Activated naive CD4-positive, alpha-beta T cell treated with anti-CD3 and anti-CD28 coated beads, Interleukin-2, amount 10 ng/mL, durations not matched to agents 7 days and 5 days (primary cell): ENCODE measurements at regions of chr10 and their contacts with region 1.

Region 1: GRCh38 chr10:110803830-110804338 is 67.8 kb upstream of the PDCD4 start:
- DNase-seq: peak; percentile 44
- H3K4me3 Mint-ChIP-seq: no peak overlapping the region
- H3K27ac Mint-ChIP-seq: peak overlapping the region; percentile 80
- H3K4me1 Mint-ChIP-seq: peaks cover 39% of the 10 kb centered on the region
- H3K27me3 Mint-ChIP-seq: peaks cover 9% of the 10 kb centered on the region

Region 2: GRCh38 chr10:110460111-110460809 is 343.6 kb before region 1 on chr10:
- CTCF ChIA-PET with region 1: no interaction called
- DNase-seq: peak; percentile 44
- H3K4me3 Mint-ChIP-seq: no peak overlapping the region
- H3K27ac Mint-ChIP-seq: no peak overlapping the region
- H3K4me1 Mint-ChIP-seq: peaks cover 52% of the 10 kb centered on the region
- H3K27me3 Mint-ChIP-seq: peaks cover 46% of the 10 kb centered on the region

Region 3: GRCh38 chr10:110746254-110746826 is 57.5 kb before region 1 on chr10:
- CTCF ChIA-PET with region 1: interaction called, 24 read pairs
- DNase-seq: peak; percentile 61
- H3K4me3 Mint-ChIP-seq: no peak overlapping the region
- H3K27ac Mint-ChIP-seq: no peak overlapping the region
- H3K4me1 Mint-ChIP-seq: peaks cover 70% of the 10 kb centered on the region
- H3K27me3 Mint-ChIP-seq: peaks cover 4% of the 10 kb centered on the region

Region 4: DNA sequence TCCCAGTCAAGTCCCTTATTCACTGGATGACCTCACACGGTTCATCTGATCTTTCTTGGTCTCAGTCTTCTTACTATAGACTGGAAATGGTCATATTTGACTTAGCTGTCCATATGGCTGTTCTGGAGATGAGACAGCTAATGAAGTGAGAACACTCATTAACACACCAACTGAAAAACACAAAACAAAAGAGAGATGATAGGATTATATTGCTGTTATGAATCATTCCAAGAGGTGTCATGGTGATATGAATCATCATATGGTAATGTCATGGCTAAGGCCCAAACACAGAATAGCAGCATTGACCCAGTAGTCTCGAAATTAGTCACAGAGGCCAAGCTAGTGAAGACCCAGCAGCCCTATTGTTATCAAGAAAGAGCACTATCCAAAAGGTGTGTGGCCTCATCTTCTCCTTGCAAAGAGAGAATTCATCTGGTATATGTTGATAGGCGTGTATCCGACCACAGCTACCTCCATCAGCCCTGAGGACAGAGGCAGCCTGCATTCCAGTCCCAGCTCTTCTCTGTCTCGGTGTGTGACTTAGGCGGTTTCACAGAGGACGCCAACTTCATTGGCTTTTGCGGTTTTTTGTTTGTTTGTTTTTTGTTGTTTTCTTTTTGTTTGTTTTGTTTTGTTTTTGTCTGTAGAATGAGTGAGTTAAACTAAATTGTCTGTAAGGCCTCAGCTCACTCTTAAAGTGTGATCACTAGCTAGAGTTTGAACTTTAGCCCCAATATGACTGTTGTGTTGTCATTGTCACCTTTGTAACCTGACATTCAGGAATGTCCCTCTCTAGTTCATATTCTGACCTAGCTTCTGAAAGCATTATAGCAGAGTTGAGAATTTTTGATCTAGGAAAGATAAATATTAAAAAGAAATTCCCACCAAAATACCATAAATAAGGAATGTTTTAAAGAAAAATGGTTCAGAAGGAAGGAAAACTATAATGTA is 29.5 kb before region 1 on chr10:
- CTCF ChIA-PET with region 1: interaction called, 10 read pairs
- DNase-seq: peak; percentile 25
- H3K4me3 Mint-ChIP-seq: no peak overlapping the region
- H3K27ac Mint-ChIP-seq: no peak overlapping the region
- H3K4me1 Mint-ChIP-seq: peaks cover 11% of the 10 kb centered on the region
- H3K27me3 Mint-ChIP-seq: no peaks in the 10 kb centered on the region

Region 5: GRCh38 chr10:110834629-110835301 is 30.9 kb after region 1 on chr10:
- CTCF ChIA-PET with region 1: interaction called, 13 read pairs
- DNase-seq: peak; percentile 49
- H3K4me3 Mint-ChIP-seq: no peak overlapping the region
- H3K27ac Mint-ChIP-seq: peak overlapping the region; percentile 76
- H3K4me1 Mint-ChIP-seq: peaks cover 39% of the 10 kb centered on the region
- H3K27me3 Mint-ChIP-seq: no peaks in the 10 kb centered on the region

Region 6: GRCh38 chr10:110857265-110858158 is 53.6 kb after region 1 on chr10:
- CTCF ChIA-PET with region 1: interaction called, 16 read pairs
- DNase-seq: no peak
- H3K4me3 Mint-ChIP-seq: no peak overlapping the region
- H3K27ac Mint-ChIP-seq: peak overlapping the region; percentile 95
- H3K4me1 Mint-ChIP-seq: peaks cover 90% of the 10 kb centered on the region
- H3K27me3 Mint-ChIP-seq: no peaks in the 10 kb centered on the region

Region 7: GRCh38 chr10:110893559-110894179 is 89.8 kb after region 1 on chr10:
- CTCF ChIA-PET with region 1: interaction called, 47 read pairs
- DNase-seq: no peak
- H3K4me3 Mint-ChIP-seq: no peak overlapping the region
- H3K27ac Mint-ChIP-seq: no peak overlapping the region
- H3K4me1 Mint-ChIP-seq: peaks cover 5% of the 10 kb centered on the region
- H3K27me3 Mint-ChIP-seq: no peaks in the 10 kb centered on the region

Region 8: GRCh38 chr10:111007486-111007885 is 203.6 kb after region 1 on chr10:
- CTCF ChIA-PET with region 1: no interaction called
- DNase-seq: no peak
- H3K4me3 Mint-ChIP-seq: no peak overlapping the region
- H3K27ac Mint-ChIP-seq: no peak overlapping the region
- H3K4me1 Mint-ChIP-seq: no peaks in the 10 kb centered on the region
- H3K27me3 Mint-ChIP-seq: no peaks in the 10 kb centered on the region